ENCODE measurements at regions of chr4 and their contacts with region 1.

Region 1: GRCh38 chr4:73653695-73654106 is 33.5 kb upstream of the RASSF6 start:
- DNase-seq: peak; percentile 60
- H3K4me3 ChIP-seq: no peak overlapping the region
- H3K27ac ChIP-seq: no peak overlapping the region
- H3K4me1 ChIP-seq: peaks cover 25% of the 10 kb centered on the region
- H3K27me3 ChIP-seq: no peaks in the 10 kb centered on the region
- CTCF ChIP-seq: peak; percentile 25 to 63

Region 2: DNA sequence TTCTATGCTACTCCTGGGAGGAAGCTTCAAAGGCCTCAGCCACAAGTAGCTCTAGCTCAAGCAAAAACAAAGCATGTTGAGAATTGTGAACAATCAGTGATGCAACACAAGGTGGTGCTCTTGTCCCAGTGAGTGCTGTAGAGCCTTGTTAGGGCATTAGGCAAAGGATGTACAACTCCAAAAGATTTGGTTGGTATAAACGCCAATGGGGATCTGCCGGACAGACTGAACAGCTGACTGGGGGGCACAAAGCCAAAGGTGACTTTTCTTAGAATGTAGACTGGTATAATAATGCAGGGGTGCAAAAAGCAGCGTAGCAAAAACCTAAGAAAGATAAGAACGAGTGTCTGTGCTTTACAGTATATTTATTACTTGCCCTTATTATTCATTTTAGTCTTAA is 312.2 kb before region 1 on chr4:
- CTCF ChIA-PET with region 1: interaction called, 15 read pairs
- dilution Hi-C with region 1: no loop called
- in situ Hi-C with region 1: loop called (anchors 10 kb)
- intact Hi-C with region 1: loop called (anchors 1 kb)
- DNase-seq: peak; percentile 51
- H3K4me3 ChIP-seq: no peak overlapping the region
- H3K27ac ChIP-seq: no peak overlapping the region
- H3K4me1 ChIP-seq: no peaks in the 10 kb centered on the region
- H3K27me3 ChIP-seq: peaks cover 3% of the 10 kb centered on the region
- CTCF ChIP-seq: peak; percentile 67 to 87

Region 3: DNA sequence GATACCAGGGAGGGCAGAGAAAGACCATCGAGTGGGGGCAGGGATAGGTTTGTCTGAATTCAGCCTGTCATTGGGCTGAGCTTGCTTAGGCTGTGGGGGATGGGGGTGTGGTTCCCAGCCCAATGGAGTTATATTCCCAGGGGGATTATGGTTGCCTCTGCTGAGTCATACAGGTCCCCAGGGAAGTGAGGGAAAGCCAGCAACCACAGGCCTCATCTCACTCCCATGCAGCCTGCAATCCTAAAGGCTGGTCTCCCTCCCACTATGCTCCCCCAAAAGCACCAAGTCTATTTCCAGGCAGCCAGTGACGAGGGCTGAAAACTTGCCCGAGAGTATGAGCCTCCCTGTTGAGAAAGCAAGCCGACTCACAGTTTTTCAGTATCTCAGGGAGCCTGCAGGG is 132.9 kb before region 1 on chr4:
- CTCF ChIA-PET with region 1: interaction called, 11 read pairs
- dilution Hi-C with region 1: no loop called
- in situ Hi-C with region 1: no loop called
- intact Hi-C with region 1: loop called (anchors 1 kb)
- DNase-seq: no peak
- H3K4me3 ChIP-seq: no peak overlapping the region
- H3K27ac ChIP-seq: no peak overlapping the region
- H3K4me1 ChIP-seq: no peaks in the 10 kb centered on the region
- H3K27me3 ChIP-seq: peaks cover 3% of the 10 kb centered on the region
- CTCF ChIP-seq: no peak

Region 4: GRCh38 chr4:73593631-73594241 is 60.0 kb before region 1 on chr4:
- CTCF ChIA-PET with region 1: no interaction called
- dilution Hi-C with region 1: loop called (anchors 5 kb)
- in situ Hi-C with region 1: loop called (anchors 5 to 10 kb)
- intact Hi-C with region 1: loop called (anchors 1 kb)
- DNase-seq: no peak
- H3K4me3 ChIP-seq: no peak overlapping the region
- H3K27ac ChIP-seq: no peak overlapping the region
- H3K4me1 ChIP-seq: peaks cover 26% of the 10 kb centered on the region
- H3K27me3 ChIP-seq: no peaks in the 10 kb centered on the region
- CTCF ChIP-seq: peak; percentile 51 to 62

Region 5: GRCh38 chr4:73698217-73698616 is 44.5 kb after region 1 on chr4:
- CTCF ChIA-PET with region 1: no interaction called
- dilution Hi-C with region 1: no loop called
- in situ Hi-C with region 1: no loop called
- intact Hi-C with region 1: no loop called
- DNase-seq: peak; percentile 87
- H3K4me3 ChIP-seq: no peak overlapping the region
- H3K27ac ChIP-seq: no peak overlapping the region
- H3K4me1 ChIP-seq: peaks cover 30% of the 10 kb centered on the region
- H3K27me3 ChIP-seq: no peaks in the 10 kb centered on the region
- CTCF ChIP-seq: no peak

Region 6: GRCh38 chr4:73816814-73817213 is 163.1 kb after region 1 on chr4:
- CTCF ChIA-PET with region 1: interaction called, 24 read pairs
- dilution Hi-C with region 1: no loop called
- in situ Hi-C with region 1: no loop called
- intact Hi-C with region 1: no loop called
- DNase-seq: peak; percentile 92
- H3K4me3 ChIP-seq: no peak overlapping the region
- H3K27ac ChIP-seq: peak overlapping the region; percentile 77
- H3K4me1 ChIP-seq: peaks cover 25% of the 10 kb centered on the region
- H3K27me3 ChIP-seq: no peaks in the 10 kb centered on the region
- CTCF ChIP-seq: no peak

Region 7: GRCh38 chr4:73922766-73923630 is 269.3 kb after region 1 on chr4:
- CTCF ChIA-PET with region 1: interaction called, 4 read pairs
- dilution Hi-C with region 1: no loop called
- in situ Hi-C with region 1: loop called in 1 of 2 experiments (anchors 5 kb)
- intact Hi-C with region 1: no loop called
- DNase-seq: peak; percentile 33
- H3K4me3 ChIP-seq: no peak overlapping the region
- H3K27ac ChIP-seq: peak overlapping the region; percentile 3
- H3K4me1 ChIP-seq: peaks cover 10% of the 10 kb centered on the region
- H3K27me3 ChIP-seq: no peaks in the 10 kb centered on the region
- CTCF ChIP-seq: peak; percentile 35 to 53

Region 8: DNA sequence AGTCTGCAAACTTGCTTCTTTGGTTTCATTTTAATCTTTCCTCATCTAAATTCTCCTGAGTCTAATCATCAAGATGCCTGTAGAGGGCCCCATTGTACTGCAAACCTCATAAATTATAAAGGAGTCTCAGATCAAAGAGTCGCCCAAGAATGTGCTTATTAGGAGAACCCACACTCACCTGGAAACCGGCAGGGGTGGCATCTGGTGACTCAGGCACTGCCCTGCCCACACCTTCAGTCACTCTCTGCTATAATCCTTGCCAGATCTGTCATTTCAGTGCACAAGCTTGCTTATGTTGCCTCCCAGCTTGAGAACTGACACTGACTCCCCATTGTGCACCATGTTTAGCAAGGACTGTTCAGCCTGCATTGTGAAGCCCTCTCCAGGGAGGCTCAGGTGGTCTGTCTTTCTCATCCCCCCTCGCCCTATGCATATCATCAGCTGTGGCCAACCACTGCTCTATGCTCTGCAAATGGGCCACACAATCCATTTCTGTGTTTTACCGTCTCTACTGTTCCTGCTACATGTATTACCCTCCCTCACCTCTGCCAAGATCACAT is 666.9 kb after region 1 on chr4:
- CTCF ChIA-PET with region 1: no interaction called
- dilution Hi-C with region 1: no loop called
- in situ Hi-C with region 1: no loop called
- intact Hi-C with region 1: no loop called
- DNase-seq: peak; percentile 90
- H3K4me3 ChIP-seq: no peak overlapping the region
- H3K27ac ChIP-seq: peak overlapping the region; percentile 20
- H3K4me1 ChIP-seq: peaks cover 15% of the 10 kb centered on the region
- H3K27me3 ChIP-seq: no peaks in the 10 kb centered on the region
- CTCF ChIP-seq: peak; percentile 50 to 66